ENCODE measurements at regions of chr18 and their contacts with region 1.

Region 1: GRCh38 chr18:23452728-23453679 is at the start of gene RIOK3:
- DNase-seq: peak; percentile 97
- ATAC-seq: peak; percentile 93
- H3K4me3 ChIP-seq: peak within 1 kb of the TSS; percentile 99
- H3K27ac ChIP-seq: peak within 1 kb of the TSS; percentile 90
- H3K4me1 ChIP-seq: peaks cover 19% of the 10 kb centered on the region
- H3K27me3 ChIP-seq: no peaks in the 10 kb centered on the region
- CTCF ChIP-seq: no peak
- total RNA-seq, gene RIOK3: 35.0 and 41.4 TPM in 2 replicates

Region 2: GRCh38 chr18:23032030-23032582 is 420.9 kb before region 1 on chr18:
- CTCF ChIA-PET with region 1: no interaction called
- POLR2A ChIA-PET with region 1: interaction called, 12 read pairs
- intact Hi-C with region 1: no loop called
- DNase-seq: peak; percentile 52
- ATAC-seq: no peak; the same call in 1 of the 2 replicates
- H3K4me3 ChIP-seq: no peak overlapping the region
- H3K27ac ChIP-seq: peak overlapping the region; percentile 23
- H3K4me1 ChIP-seq: peaks cover 17% of the 10 kb centered on the region
- H3K27me3 ChIP-seq: no peaks in the 10 kb centered on the region
- CTCF ChIP-seq: no peak

Region 3: DNA sequence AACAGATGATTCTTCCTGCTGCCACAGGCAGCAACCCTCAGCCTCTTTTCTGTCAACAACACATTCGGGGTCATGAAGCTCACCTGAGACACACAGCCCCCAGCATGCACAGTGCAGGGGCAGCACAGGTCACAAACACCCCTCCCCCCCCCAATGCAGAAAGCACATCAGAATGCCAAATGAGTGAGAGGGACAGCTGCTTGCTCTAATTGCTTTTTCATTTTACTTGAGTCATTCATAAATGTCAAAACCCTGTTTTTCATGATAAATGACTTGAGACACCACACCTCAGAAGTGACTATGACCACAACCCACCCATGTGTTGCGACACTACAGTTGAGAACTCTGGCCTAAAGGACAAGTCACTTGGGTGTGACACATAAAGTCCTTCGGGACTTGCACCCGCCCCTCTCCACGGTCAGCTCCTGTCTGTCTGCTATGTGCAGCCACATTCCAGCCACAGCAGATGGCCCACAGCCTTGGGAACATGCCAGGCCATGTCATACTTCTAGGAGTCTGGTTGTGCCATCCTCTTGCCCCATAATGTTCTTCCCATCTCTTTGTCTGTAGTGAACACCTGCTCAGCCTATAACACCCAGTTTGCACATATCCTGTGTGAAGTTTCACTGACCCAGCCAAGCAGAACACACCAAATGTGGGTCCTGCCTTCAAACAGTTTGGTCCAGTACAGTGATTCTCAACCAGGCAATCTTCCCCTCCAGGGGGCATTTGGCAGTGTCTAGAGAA is 30.2 kb before region 1 on chr18:
- CTCF ChIA-PET with region 1: no interaction called
- POLR2A ChIA-PET with region 1: interaction called, 4 read pairs
- intact Hi-C with region 1: loop called (anchors 2 kb)
- DNase-seq: peak; percentile 91
- ATAC-seq: peak; percentile 87
- H3K4me3 ChIP-seq: no peak overlapping the region
- H3K27ac ChIP-seq: peak overlapping the region; percentile 36
- H3K4me1 ChIP-seq: peaks cover 15% of the 10 kb centered on the region
- H3K27me3 ChIP-seq: no peaks in the 10 kb centered on the region
- CTCF ChIP-seq: no peak

Region 4: DNA sequence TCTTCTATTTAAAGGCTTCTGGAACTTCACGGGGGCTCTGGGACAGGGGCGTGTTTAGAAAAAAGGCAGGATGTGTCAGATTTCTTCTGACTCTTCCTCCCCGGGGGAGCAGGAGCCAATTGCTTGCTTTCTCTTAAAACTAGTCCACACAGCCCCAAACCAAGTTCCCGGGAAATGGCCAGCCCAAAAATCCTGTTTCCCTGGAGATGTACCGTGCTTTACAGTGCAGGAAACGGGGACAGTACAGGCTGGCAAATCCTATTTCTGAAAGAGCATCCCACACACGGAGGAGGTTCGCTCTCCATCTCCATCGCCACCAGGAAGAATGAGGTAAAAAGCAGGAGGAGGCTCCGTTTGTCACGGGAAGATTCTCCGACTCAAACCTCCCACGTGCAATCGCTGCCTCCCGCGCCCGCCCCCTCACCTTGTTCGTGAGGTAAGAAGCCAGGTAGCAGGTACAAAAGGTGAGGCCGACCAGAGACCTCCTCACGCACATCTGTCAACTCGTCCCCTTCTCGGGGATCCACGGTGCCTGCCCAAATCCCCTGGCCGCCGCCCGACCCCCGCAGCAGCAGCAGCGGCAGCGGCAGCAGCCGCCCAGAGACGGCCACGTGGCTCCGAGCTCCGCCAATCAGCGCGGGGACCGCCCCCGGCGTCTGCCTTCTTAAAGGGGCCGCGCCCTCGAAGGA is 15.5 kb before region 1 on chr18:
- CTCF ChIA-PET with region 1: no interaction called
- POLR2A ChIA-PET with region 1: no interaction called
- intact Hi-C with region 1: loop called (anchors 2 kb)
- DNase-seq: peak; percentile 77
- ATAC-seq: peak; percentile 96
- H3K4me3 ChIP-seq: peak overlapping the region; percentile 93
- H3K27ac ChIP-seq: peak overlapping the region; percentile 50
- H3K4me1 ChIP-seq: peaks cover 5% of the 10 kb centered on the region; the same call in 1 of the 2 replicates
- H3K27me3 ChIP-seq: no peaks in the 10 kb centered on the region
- CTCF ChIP-seq: no peak

Region 5: DNA sequence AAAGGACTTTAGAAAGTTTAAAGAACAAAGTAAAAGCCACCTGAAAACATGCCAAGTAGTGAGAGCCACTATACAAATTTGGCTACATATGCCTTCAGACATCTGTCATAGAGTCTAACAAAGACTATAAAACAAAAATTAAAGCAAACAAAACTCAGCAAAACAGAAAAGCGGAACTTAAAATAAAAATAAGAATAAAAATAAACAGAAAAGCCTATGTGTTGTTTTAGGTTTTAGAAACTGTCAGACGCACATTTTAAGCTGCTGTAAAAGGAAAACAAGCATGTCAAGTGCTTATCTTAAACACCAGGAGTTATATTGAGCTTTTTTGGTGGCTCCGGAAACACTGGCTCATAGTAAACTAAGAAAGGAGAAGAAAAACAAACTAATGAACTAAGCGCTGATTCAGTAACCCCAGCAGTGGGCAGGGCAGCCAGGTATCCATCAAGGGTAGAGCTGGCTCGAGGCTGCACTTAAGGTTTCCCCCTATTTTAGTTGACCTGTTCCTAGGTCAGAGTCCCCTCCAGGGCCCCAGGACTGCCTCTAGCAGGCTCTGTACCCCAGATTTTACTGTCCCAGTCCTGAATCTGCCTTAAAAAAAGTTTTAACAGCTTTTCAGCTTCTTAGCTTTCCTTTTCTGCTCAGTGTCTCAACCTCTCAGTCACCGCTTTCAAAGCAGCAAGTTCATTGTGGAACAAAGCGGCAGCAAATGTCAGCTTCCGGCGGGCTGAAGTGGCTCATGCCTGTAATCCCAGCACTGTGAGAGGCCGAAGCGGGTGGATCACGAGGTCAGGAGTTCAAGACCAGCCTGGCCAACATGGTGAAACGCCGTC is 35.0 kb after region 1 on chr18:
- CTCF ChIA-PET with region 1: no interaction called
- POLR2A ChIA-PET with region 1: interaction called, 7 read pairs
- intact Hi-C with region 1: loop called (anchors 2 kb)
- DNase-seq: peak; percentile 76
- ATAC-seq: peak; percentile 92
- H3K4me3 ChIP-seq: peak overlapping the region; percentile 66
- H3K27ac ChIP-seq: peak overlapping the region; percentile 83
- H3K4me1 ChIP-seq: peaks cover 19% of the 10 kb centered on the region
- H3K27me3 ChIP-seq: no peaks in the 10 kb centered on the region
- CTCF ChIP-seq: no peak

Region 6: DNA sequence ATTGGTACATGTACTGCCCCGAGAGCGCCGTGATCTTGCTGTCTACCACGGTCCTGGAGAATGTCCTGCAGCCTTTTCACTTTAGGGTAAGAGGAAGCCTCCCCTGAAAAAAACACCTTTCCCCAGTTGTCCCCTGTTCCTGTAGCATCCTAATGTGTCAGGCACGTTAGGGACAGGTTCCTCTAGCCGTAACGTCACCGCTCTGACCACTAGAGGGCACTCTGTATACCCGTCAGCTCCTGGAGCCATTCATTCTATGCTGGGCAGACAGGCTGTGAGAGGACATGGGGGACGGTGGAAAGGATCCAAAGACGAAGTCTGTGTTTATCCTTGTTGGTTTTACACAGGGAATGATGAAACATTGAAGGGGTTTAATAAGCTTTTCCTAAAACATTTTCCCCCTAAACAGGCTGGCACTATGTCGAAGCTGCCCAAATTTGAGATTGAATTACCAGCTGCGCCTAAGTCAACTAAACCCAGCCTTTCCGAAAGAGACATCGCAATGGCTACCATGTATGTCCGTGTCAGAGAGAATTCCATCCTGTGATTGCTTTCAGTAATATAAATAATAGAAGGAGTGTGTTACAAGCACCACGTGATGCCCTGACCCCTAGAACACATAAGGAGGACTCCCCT is 63.0 kb after region 1 on chr18:
- CTCF ChIA-PET with region 1: no interaction called
- POLR2A ChIA-PET with region 1: no interaction called
- intact Hi-C with region 1: no loop called
- DNase-seq: peak; percentile 86
- ATAC-seq: peak; percentile 100
- H3K4me3 ChIP-seq: no peak overlapping the region
- H3K27ac ChIP-seq: no peak overlapping the region
- H3K4me1 ChIP-seq: no peaks in the 10 kb centered on the region
- H3K27me3 ChIP-seq: no peaks in the 10 kb centered on the region
- CTCF ChIP-seq: peak; percentile 94

Region 7: DNA sequence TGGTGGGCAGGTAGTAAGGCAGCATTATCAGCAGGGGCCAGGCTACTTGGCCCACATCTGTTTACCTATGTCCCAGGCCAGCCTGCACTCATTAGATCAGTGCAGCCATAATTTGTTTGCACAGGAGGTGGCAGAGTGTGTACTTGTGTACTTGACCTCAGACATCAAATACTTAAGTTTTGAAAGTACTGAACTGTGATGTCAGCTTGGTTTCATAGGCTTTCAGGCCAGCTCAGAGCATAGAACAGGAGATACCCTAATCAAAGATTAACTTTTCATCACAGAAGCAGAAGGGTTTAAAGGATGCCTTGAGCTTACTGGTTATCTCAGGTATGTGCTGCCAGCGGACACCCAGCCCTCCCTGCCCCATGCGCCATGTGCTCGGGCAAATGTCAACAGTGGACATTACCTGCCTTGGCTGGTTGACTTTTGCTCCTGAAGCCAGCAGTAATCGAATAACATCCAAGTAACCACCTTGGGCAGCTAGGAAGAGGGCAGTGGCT is 176.5 kb after region 1 on chr18:
- CTCF ChIA-PET with region 1: no interaction called
- POLR2A ChIA-PET with region 1: interaction called, 16 read pairs
- intact Hi-C with region 1: no loop called
- DNase-seq: peak; percentile 37
- ATAC-seq: peak; percentile 28
- H3K4me3 ChIP-seq: no peak overlapping the region
- H3K27ac ChIP-seq: peak overlapping the region; percentile 98
- H3K4me1 ChIP-seq: peaks cover 49% of the 10 kb centered on the region
- H3K27me3 ChIP-seq: no peaks in the 10 kb centered on the region
- CTCF ChIP-seq: no peak